Cardiac septum (tissue), 1 donor: ENCODE measurements at regions of chr20 and their contacts with region 1.

Region 1: DNA sequence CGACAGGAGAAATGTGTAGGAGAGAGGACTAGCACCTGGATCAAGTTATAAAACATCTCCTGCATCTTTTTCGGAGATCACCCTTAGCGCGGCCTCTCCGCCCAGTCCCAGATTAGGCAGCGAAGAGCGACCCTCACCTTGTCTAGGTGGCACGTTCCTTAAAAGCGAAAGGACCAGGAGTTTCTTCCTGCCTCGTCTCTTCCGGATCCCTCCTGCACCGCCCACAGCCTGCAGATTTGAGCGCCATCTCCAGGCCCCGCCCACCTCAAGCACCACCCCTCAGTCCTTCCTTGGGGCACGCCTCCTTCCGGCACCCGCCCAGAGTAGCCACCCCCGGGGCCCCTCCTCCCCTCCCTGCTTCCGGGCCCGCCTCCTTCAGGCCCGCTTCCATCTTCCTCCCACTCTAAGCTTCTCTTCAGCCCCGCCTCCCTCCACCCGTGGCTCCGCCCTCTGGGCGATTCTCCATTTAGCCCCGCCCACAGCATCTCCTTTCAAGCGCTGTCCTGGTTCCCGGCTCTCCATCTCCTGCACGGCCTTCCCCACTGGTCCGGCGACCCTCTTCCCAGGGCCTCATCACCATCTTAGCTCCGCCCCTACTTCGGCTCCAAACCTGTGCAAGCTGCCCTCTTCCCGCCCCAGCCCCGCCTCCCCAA is 662 bp upstream of the RALY start:
- DNase-seq: peak; percentile 100

Region 2: GRCh38 chr20:33686100-33686983 is 306.7 kb before region 1 on chr20 and contains the start of gene E2F1:
- intact Hi-C with region 1: loop called (anchors 10 kb)
- DNase-seq: peak; percentile 98
- total RNA-seq, gene E2F1: 2.3 TPM

Region 3: GRCh38 chr20:33810885-33811777 is 181.9 kb before region 1 on chr20 and contains the start of gene CHMP4B:
- intact Hi-C with region 1: loop called (anchors 5 kb)
- DNase-seq: peak; percentile 100
- total RNA-seq, gene CHMP4B: 101 TPM

Region 4: GRCh38 chr20:34042262-34042661 is 49.2 kb after region 1 on chr20:
- intact Hi-C with region 1: loop called (anchors 2 kb)
- DNase-seq: no peak

Region 5: GRCh38 chr20:34069341-34070078 is 76.5 kb after region 1 on chr20:
- intact Hi-C with region 1: loop called (anchors 5 kb)
- DNase-seq: no peak

Region 6: GRCh38 chr20:34111702-34112599 is 118.9 kb after region 1 on chr20 and contains the start of gene EIF2S2:
- intact Hi-C with region 1: loop called (anchors 1 kb)
- DNase-seq: peak; percentile 98
- total RNA-seq, gene EIF2S2: 38.3 TPM